Heart left ventricle (tissue), 16 donors: ENCODE measurements at regions of chr17 and their contacts with region 1.

Region 1: DNA sequence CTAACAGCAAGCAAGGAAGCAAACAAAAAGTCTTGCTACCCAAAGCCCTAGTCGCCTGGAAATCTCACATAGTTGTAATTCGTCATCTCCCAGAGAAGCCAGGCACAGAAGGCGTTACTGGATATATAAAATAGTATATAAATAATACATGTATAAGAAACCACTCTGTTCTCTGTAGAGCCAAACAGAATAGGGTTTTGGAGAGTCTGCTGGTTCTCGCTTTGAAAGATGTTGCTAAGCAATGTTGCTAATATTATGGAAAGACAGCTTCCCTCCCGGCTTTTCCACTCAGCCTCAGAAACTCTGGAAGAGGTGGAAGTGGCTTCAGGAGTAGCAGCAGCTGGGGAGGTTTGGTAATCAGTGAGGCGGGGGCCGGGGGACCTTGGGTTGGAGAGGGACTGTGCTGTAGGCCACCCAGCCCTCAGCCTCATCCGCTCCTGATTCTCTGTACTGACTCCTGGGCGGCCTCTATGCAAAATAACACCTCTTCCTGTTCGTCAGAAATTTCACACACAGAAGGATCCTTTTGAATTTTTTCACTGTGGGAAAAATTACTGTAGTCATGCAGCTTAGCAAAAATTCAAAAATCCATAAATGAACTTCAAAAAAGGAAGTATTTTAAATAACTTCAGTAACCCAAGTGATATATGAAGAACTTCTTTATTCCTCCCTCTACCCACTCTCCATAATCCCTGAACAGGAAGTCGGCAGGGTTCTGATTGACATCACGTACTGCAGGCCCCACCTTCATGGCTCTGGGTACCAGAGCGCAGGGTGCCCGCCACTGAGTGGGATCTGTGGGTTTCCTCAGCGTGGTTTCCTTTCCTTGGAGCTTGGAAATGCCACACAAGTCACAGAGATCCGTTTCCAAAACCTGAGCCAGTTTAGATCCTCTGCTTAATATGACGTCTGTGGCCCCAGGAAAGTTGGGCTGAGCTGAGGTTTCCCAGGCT is 51.4 kb downstream of the RAP1GAP2 start:
- DNase-seq: no peak
- ATAC-seq: peak in 1 of 4 donors; percentile 39
- H3K4me3 ChIP-seq: no peak overlapping the region
- H3K27ac ChIP-seq: peak overlapping the region in 4 of 12 donors; percentile 14 to 47 (median 22)
- H3K4me1 ChIP-seq: peaks cover 0 to 21% (median 6%) of the 10 kb centered on the region in 12 donors
- H3K27me3 ChIP-seq: no peaks in the 10 kb centered on the region
- CTCF ChIP-seq: no peak
- POLR2A ChIP-seq: no peak

Region 2: DNA sequence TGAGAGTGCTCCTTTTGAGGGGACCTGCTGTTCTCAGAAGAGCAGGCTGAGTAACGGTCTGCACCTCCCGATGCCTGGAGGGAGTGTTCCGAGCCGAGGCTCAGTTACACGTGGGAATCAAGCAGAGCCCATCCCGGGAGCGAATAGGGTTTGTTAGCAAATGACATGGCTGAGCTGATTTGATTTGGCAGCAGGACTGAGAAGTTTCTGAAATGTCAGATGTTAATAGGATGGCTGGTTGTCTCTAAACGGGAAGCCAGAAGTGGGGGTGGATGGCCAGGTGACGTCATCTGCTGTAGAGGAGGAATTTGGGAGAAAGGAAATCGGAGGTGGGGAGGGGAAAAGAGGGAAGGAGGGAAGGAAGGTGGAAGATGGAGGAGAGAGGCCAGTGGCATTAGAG is 76.6 kb after region 1 on chr17:
- intact Hi-C with region 1: loop called in 4 of 10 experiments (anchors 2 to 10 kb)
- DNase-seq: no peak
- ATAC-seq: peak in 2 of 4 donors; percentile 36 to 37
- H3K4me3 ChIP-seq: peak overlapping the region in 1 of 12 donors; percentile 12
- H3K27ac ChIP-seq: no peak overlapping the region
- H3K4me1 ChIP-seq: peaks cover 0 to 9% (median 3%) of the 10 kb centered on the region in 12 donors
- H3K27me3 ChIP-seq: no peaks in the 10 kb centered on the region
- CTCF ChIP-seq: no peak
- POLR2A ChIP-seq: no peak

Region 3: DNA sequence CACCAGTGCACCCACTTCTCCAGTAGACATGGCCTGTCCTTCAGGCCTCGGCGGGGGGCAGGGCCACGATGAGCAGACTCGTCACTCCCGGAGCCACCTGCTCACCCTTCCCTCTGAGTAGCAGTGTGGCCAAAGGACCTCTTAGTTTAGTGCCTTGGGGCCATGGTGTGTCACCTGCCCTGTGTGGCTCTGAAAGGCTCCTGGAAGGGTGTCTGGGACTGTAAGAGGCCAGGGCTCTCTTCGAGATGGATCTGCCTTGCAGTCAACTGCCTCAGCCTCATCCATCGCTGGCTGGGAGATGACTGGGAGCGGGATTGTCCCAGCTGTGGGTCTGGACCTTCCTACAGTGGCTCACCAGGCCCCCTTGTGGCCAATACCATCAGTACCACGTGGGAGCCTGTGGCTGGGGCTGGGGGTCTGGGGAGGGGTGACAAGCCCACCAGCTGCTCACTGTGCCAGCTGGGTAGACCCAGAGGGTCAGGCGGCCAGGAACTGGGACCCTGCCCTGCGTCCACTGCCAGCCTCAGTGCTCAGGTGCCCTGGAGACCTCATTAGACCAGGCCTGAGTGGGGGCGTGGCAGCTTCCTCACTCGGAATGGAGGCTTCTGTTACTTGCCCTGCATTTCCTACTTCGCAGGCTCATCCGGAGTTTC is 82.3 kb after region 1 on chr17:
- intact Hi-C with region 1: loop called in 9 of 10 experiments (anchors 2 to 10 kb)
- DNase-seq: peak in 1 of 5 donors; percentile 39
- ATAC-seq: peak; percentile 56 to 79 (median 70)
- H3K4me3 ChIP-seq: no peak overlapping the region
- H3K27ac ChIP-seq: no peak overlapping the region
- H3K4me1 ChIP-seq: no peaks in the 10 kb centered on the region
- H3K27me3 ChIP-seq: no peaks in the 10 kb centered on the region
- CTCF ChIP-seq: peak; percentile 47 to 70 (median 60)
- POLR2A ChIP-seq: no peak

Region 4: DNA sequence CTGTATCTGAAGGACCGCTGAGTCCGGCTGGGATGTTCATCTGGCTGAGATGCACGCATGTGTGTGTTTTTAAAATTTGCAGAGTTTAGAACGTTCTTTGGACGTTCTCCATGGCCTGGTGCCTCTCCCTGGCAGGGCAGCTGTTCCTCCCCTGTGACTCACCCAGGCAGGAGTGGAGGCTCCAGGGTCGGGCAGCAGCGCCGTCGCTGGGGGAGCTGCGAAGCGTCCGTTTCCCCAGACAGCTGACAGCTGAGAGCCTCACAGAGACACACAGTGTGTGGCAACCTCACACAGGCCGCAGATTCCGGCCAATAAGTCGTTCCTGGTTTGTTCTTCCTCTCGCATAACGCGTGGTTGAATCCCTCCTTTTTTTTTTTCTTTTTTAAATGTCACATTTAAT is 135.2 kb after region 1 on chr17:
- intact Hi-C with region 1: loop called in 1 of 10 experiments (anchors 5 kb)
- DNase-seq: peak; percentile 63 to 89 (median 82)
- ATAC-seq: peak; percentile 98 to 99 (median 99)
- H3K4me3 ChIP-seq: peak overlapping the region in 2 of 12 donors; percentile 9 to 19
- H3K27ac ChIP-seq: peak overlapping the region in 11 of 12 donors; percentile 6 to 72 (median 33)
- H3K4me1 ChIP-seq: peaks cover 0 to 11% (median 1%) of the 10 kb centered on the region in 12 donors
- H3K27me3 ChIP-seq: no peaks in the 10 kb centered on the region
- CTCF ChIP-seq: peak in 9 of 12 donors; percentile 25 to 62 (median 40)
- POLR2A ChIP-seq: no peak

Region 5: DNA sequence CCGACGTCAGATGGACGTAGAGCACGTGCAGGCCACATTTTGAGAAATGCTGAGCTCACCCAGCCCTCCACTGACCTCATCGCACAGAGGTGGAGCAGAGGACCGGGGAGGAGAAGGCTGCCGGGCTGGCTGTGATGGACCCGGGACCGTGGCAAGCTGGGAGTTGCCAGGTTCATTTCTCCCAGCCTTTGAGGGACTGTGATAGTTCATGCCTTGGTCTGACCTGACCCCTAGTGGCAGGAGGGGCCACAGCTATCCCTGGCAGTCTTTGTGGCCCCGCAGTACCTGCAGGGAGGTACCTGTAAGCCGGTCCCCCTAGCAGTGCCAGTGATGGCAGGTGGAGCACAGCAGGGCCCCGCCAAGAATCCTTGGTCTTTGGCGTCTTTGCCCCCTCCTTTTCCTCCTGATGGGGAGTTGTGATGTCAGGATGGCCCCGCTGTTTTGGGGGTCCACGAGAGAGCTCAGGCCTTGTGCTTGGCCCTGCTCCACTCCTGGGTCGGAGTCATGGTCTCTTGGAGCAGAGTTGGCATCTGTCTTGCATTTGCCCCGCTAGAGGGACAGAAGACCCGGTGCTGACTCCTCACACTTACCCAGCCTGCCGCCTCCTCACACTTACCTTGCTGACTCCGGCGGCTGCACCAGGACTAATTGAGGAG is 165.4 kb after region 1 on chr17:
- intact Hi-C with region 1: loop called (anchors 1 to 10 kb)
- DNase-seq: peak; percentile 61 to 72 (median 62)
- ATAC-seq: peak; percentile 76 to 90 (median 87)
- H3K4me3 ChIP-seq: no peak overlapping the region
- H3K27ac ChIP-seq: no peak overlapping the region
- H3K4me1 ChIP-seq: peaks cover 0 to 4% (median 0%) of the 10 kb centered on the region in 12 donors
- H3K27me3 ChIP-seq: no peaks in the 10 kb centered on the region
- CTCF ChIP-seq: peak; percentile 66 to 87 (median 82)
- POLR2A ChIP-seq: no peak